HepG2 (cell line): ENCODE measurements at regions of chr6 and their contacts with region 1.

Region 1: DNA sequence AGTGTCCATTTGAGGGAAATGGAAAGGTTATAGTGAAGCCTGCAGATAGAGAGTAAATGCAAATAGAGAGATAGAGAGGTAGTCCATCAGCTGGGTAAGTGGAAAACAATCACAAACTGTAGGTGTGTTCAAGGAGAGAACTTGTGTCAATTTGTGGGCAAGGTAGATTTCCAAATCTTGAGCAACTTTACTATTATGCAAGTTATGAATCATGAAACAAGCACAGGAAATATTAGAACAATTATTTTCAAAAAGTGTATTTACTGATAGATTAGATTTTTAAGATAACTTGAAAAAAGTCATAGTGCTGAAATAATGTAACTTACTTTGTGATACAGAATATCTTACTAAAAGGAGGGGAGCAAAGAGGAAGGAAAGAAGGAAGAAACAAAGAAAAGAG is 792.9 kb downstream of the EYS start:
- DNase-seq: no peak
- ATAC-seq: no peak
- H3K4me3 ChIP-seq: no peak overlapping the region
- H3K27ac ChIP-seq: no peak overlapping the region
- H3K4me1 ChIP-seq: no peaks in the 10 kb centered on the region
- H3K27me3 ChIP-seq: no peaks in the 10 kb centered on the region
- CTCF ChIP-seq: no peak
- EP300 ChIP-seq: no peak
- POLR2A ChIP-seq: no peak
- RAD21 ChIP-seq: no peak

Region 2: GRCh38 chr6:66788579-66788978 is 1874.4 kb after region 1 on chr6:
- CTCF ChIA-PET with region 1: no interaction called
- POLR2A ChIA-PET with region 1: no interaction called
- in situ Hi-C with region 1: no loop called
- intact Hi-C with region 1: loop called (anchors 5 kb)
- DNase-seq: no peak
- ATAC-seq: no peak
- H3K4me3 ChIP-seq: no peak overlapping the region
- H3K27ac ChIP-seq: no peak overlapping the region
- H3K4me1 ChIP-seq: no peaks in the 10 kb centered on the region
- H3K27me3 ChIP-seq: no peaks in the 10 kb centered on the region
- CTCF ChIP-seq: no peak
- EP300 ChIP-seq: no peak
- POLR2A ChIP-seq: no peak
- RAD21 ChIP-seq: no peak